Activated CD8-positive, alpha-beta T cell treated with anti-CD3 and anti-CD28 coated beads, Interleukin-2, amount 10 ng/mL, durations not matched to agents 7 days and 5 days (primary cell): ENCODE measurements at regions of chr19 and their contacts with region 1.

Region 1: DNA sequence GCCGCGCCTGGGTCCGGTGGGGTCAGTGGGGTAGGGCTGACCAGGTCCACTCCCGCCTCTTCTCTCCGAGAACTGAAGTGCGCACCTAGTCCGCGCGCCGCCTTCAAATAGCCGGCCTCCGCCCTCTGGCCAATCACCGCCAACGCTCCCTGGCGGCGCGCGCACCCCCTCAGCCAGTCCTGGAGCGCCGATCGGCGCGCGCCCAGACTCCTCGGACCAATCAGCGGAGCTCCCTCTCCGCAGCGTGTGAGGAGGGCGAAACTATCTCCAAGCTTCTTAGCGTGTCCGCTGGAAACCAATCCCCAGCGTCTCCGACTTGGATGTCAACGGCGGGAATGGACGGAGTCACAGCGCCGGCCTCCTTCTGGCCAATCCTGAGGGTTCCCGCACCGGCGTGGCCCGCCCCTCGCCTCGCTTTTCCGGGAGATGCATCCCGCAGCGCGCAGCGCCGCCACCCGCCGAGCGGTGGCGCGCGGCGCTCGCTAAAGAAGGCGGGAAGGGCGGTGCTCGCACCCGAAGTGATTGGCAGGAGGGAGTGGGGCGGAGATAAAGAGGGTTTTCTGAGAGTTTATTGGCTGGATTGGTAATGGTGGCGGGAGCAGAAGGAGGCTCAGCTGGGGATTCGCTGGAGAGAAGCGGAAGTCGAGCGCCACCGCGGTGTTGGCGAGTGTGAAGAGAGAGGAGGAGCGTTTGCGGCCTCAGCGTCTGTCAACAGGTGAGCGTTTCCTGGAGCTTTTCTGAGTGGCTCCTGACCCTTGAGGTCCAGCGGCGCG is at the start of gene ASF1B:
- DNase-seq: peak; percentile 99
- ATAC-seq: peak; percentile 89
- H3K4me3 Mint-ChIP-seq: peak within 1 kb of the TSS; percentile 85
- H3K27ac Mint-ChIP-seq: peak within 1 kb of the TSS; percentile 94
- H3K4me1 Mint-ChIP-seq: peaks cover 48% of the 10 kb centered on the region
- H3K27me3 Mint-ChIP-seq: no peaks in the 10 kb centered on the region
- total RNA-seq, gene ASF1B: 131 TPM

Region 2: GRCh38 chr19:14073261-14073924 is 63.3 kb before region 1 on chr19:
- CTCF ChIA-PET with region 1: interaction called, 30 read pairs
- POLR2A ChIA-PET with region 1: interaction called, 3 read pairs
- DNase-seq: peak; percentile 80
- ATAC-seq: peak; percentile 78
- H3K4me3 Mint-ChIP-seq: peak overlapping the region; percentile 88
- H3K27ac Mint-ChIP-seq: peak overlapping the region; percentile 80
- H3K4me1 Mint-ChIP-seq: peaks cover 30% of the 10 kb centered on the region
- H3K27me3 Mint-ChIP-seq: peaks cover 2% of the 10 kb centered on the region

Region 3: DNA sequence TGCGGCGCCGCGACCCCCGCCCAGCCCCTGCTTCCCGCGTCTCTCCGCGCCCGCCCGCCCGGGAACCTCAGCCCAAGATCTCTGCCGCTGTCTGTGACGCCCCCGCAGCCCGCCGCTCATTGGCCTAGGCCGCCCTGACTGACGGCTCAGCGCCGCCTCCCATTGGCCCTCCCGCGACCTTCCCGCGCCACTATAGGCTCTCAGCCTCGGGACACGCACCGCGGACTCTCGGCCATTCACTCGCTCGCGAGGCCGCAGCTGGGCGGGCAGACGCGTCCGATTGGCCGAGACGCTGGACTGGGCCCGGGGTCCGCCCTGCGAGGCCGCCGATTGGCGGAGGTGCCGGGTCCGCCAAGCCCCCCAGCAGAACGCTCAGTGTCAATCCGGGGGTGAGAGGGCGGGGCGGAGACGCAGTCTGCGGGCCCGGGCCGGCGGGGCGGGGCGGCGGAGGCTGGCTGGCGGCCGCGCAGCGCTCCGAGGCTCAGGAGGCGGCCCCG is 19.0 kb before region 1 on chr19 and contains the start of gene PRKACA:
- CTCF ChIA-PET with region 1: interaction called, 45 read pairs
- POLR2A ChIA-PET with region 1: interaction called, 9 read pairs
- DNase-seq: peak; percentile 99
- ATAC-seq: peak; percentile 98
- H3K4me3 Mint-ChIP-seq: peak within 1 kb of the TSS; percentile 89
- H3K27ac Mint-ChIP-seq: peak within 1 kb of the TSS; percentile 76
- H3K4me1 Mint-ChIP-seq: peaks cover 52% of the 10 kb centered on the region
- H3K27me3 Mint-ChIP-seq: no peaks in the 10 kb centered on the region
- total RNA-seq, gene PRKACA: 69.2 to 72.4 TPM

Region 4: GRCh38 chr19:14237014-14237941 is 100.6 kb after region 1 on chr19:
- CTCF ChIA-PET with region 1: no interaction called
- POLR2A ChIA-PET with region 1: no interaction called
- DNase-seq: no peak
- ATAC-seq: no peak
- H3K4me3 Mint-ChIP-seq: no peak overlapping the region
- H3K27ac Mint-ChIP-seq: no peak overlapping the region
- H3K4me1 Mint-ChIP-seq: peaks cover 11% of the 10 kb centered on the region
- H3K27me3 Mint-ChIP-seq: peaks cover 4% of the 10 kb centered on the region

Region 5: DNA sequence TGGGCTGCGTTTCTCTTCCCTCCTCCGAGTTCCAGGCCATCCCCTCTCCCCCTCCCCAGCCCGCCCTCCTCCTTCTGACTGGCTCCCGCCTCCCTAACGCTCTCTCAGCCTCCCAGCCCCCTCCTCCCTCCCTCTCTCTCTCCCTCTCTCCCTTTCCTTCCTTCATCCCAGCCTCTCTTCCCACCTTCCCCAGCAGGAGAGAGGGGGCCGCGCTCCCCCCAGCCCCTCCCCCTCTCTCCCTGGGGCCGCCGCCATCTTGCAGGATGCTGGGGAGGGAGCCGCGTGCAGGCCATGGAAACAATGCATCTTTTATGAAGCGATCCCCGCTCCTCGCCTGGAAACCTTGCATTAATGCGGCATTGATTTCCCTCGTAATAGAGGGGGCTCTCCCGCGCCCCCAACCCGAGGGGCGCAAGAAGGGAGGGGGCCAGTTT is 111.9 kb after region 1 on chr19:
- CTCF ChIA-PET with region 1: no interaction called
- POLR2A ChIA-PET with region 1: no interaction called
- DNase-seq: peak; percentile 42
- ATAC-seq: peak; percentile 53
- H3K4me3 Mint-ChIP-seq: peak overlapping the region; percentile 34
- H3K27ac Mint-ChIP-seq: peak overlapping the region; percentile 67
- H3K4me1 Mint-ChIP-seq: peaks cover 23% of the 10 kb centered on the region
- H3K27me3 Mint-ChIP-seq: peaks cover 7% of the 10 kb centered on the region

Region 6: GRCh38 chr19:14310055-14310454 is 173.4 kb after region 1 on chr19:
- CTCF ChIA-PET with region 1: interaction called, 11 read pairs
- POLR2A ChIA-PET with region 1: interaction called, 3 read pairs
- DNase-seq: no peak
- ATAC-seq: no peak
- H3K4me3 Mint-ChIP-seq: no peak overlapping the region
- H3K27ac Mint-ChIP-seq: peak overlapping the region; percentile 69
- H3K4me1 Mint-ChIP-seq: peaks cover 27% of the 10 kb centered on the region
- H3K27me3 Mint-ChIP-seq: peaks cover 2% of the 10 kb centered on the region

Region 7: GRCh38 chr19:14366498-14366915 is 229.8 kb after region 1 on chr19:
- CTCF ChIA-PET with region 1: interaction called, 12 read pairs
- POLR2A ChIA-PET with region 1: no interaction called
- DNase-seq: peak; percentile 92
- ATAC-seq: peak; percentile 38
- H3K4me3 Mint-ChIP-seq: peak overlapping the region; percentile 45
- H3K27ac Mint-ChIP-seq: peak overlapping the region; percentile 86
- H3K4me1 Mint-ChIP-seq: peaks cover 76% of the 10 kb centered on the region
- H3K27me3 Mint-ChIP-seq: no peaks in the 10 kb centered on the region

Region 8: GRCh38 chr19:14440049-14440448 is 303.4 kb after region 1 on chr19:
- CTCF ChIA-PET with region 1: interaction called, 11 read pairs
- POLR2A ChIA-PET with region 1: interaction called, 4 read pairs
- DNase-seq: peak; percentile 88
- ATAC-seq: peak; percentile 99
- H3K4me3 Mint-ChIP-seq: peak overlapping the region; percentile 93
- H3K27ac Mint-ChIP-seq: peak overlapping the region; percentile 93
- H3K4me1 Mint-ChIP-seq: peaks cover 48% of the 10 kb centered on the region
- H3K27me3 Mint-ChIP-seq: no peaks in the 10 kb centered on the region